ENCODE measurements at regions of chr22 and their contacts with region 1.

Region 1: GRCh38 chr22:38733329-38733723 is 22.5 kb downstream of the SUN2 start:
- DNase-seq: peak; percentile 74
- ATAC-seq: peak; percentile 59
- H3K4me3 Mint-ChIP-seq: peak overlapping the region; percentile 18
- H3K27ac Mint-ChIP-seq: peak overlapping the region; percentile 85
- H3K4me1 Mint-ChIP-seq: peaks cover 45% of the 10 kb centered on the region
- H3K27me3 Mint-ChIP-seq: no peaks in the 10 kb centered on the region

Region 2: GRCh38 chr22:38705235-38706100 is 27.9 kb before region 1 on chr22 and contains the start of gene GTPBP1:
- CTCF ChIA-PET with region 1: interaction called, 16 read pairs
- POLR2A ChIA-PET with region 1: interaction called, 10 read pairs
- DNase-seq: peak; percentile 99
- ATAC-seq: peak; percentile 86
- H3K4me3 Mint-ChIP-seq: peak within 1 kb of the TSS; percentile 93
- H3K27ac Mint-ChIP-seq: peak within 1 kb of the TSS; percentile 96
- H3K4me1 Mint-ChIP-seq: peaks cover 47% of the 10 kb centered on the region
- H3K27me3 Mint-ChIP-seq: no peaks in the 10 kb centered on the region
- total RNA-seq, gene GTPBP1: 71.8 to 73.9 TPM

Region 3: DNA sequence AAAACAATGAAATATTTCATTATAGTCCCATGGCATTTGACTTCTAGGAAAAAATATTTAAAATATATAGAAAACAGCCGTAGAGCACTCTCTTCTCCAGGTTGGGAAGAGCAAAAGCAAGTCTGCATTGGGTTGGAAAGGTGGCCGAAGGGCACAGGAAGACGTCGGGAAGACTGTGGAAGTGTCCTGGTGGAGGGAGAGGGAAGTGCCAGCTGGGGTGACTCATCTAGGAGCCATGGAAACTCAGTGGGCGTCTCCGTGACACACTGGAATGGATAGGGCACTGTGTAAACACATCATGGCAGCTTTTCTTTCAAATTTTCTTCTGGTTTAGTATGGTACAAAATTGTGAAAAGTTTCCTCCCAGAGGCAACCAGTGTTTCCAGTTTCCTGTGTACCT is 14.9 kb before region 1 on chr22:
- CTCF ChIA-PET with region 1: interaction called, 57 read pairs
- POLR2A ChIA-PET with region 1: interaction called, 41 read pairs
- DNase-seq: no peak
- ATAC-seq: no peak
- H3K4me3 Mint-ChIP-seq: no peak overlapping the region
- H3K27ac Mint-ChIP-seq: no peak overlapping the region
- H3K4me1 Mint-ChIP-seq: peaks cover 16% of the 10 kb centered on the region
- H3K27me3 Mint-ChIP-seq: no peaks in the 10 kb centered on the region

Region 4: GRCh38 chr22:38744981-38745380 is 11.7 kb after region 1 on chr22:
- CTCF ChIA-PET with region 1: interaction called, 35 read pairs
- POLR2A ChIA-PET with region 1: interaction called, 307 read pairs
- DNase-seq: no peak
- ATAC-seq: no peak
- H3K4me3 Mint-ChIP-seq: peak overlapping the region; percentile 5
- H3K27ac Mint-ChIP-seq: peak overlapping the region; percentile 57
- H3K4me1 Mint-ChIP-seq: peaks cover 54% of the 10 kb centered on the region
- H3K27me3 Mint-ChIP-seq: no peaks in the 10 kb centered on the region

Region 5: DNA sequence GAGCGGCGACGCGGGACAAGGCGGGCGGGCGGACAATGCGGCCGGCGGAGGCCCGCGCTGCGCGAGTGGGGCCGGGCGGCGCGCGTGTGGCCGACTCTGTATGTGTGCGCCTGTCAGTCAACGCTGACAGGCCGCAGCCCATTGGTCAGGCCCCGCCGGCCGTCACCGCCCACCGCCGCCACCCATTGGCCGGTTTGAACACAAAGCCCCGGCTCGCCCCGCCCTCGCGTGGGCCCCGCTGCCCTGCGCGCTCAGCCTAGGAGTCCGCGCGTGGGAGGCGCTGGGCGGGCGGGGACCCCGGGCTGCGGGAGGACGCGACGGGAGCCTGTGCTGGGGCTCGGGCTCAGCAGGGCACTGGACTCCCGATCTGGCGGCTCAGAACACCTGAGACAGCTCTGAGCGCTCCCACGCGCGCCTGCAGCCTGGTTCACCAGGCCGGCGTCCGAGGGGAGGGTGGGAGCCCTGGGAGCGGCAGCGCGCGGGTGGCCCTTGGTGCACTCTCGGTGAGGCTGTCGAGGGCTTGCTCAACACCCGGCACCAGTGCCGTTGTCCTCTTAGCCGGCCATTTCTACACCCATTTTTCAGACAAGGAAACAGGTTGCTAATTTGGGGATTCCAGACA is 22.7 kb after region 1 on chr22 and contains the start of gene SUN2:
- CTCF ChIA-PET with region 1: interaction called, 23 read pairs
- POLR2A ChIA-PET with region 1: interaction called, 307 read pairs
- DNase-seq: peak; percentile 95
- ATAC-seq: peak; percentile 76
- H3K4me3 Mint-ChIP-seq: peak within 1 kb of the TSS; percentile 97
- H3K27ac Mint-ChIP-seq: peak within 1 kb of the TSS; percentile 95
- H3K4me1 Mint-ChIP-seq: peaks cover 52% of the 10 kb centered on the region
- H3K27me3 Mint-ChIP-seq: no peaks in the 10 kb centered on the region
- total RNA-seq, gene SUN2: 481 to 482 TPM

Region 6: GRCh38 chr22:38843201-38843715 is 109.9 kb after region 1 on chr22:
- CTCF ChIA-PET with region 1: interaction called, 11 read pairs
- POLR2A ChIA-PET with region 1: no interaction called
- DNase-seq: peak; percentile 56
- ATAC-seq: peak; percentile 90
- H3K4me3 Mint-ChIP-seq: no peak overlapping the region
- H3K27ac Mint-ChIP-seq: no peak overlapping the region
- H3K4me1 Mint-ChIP-seq: peaks cover 7% of the 10 kb centered on the region
- H3K27me3 Mint-ChIP-seq: peaks cover 53% of the 10 kb centered on the region